A549 (cell line): ENCODE measurements at regions of chr6 and their contacts with region 1.

Region 1: DNA sequence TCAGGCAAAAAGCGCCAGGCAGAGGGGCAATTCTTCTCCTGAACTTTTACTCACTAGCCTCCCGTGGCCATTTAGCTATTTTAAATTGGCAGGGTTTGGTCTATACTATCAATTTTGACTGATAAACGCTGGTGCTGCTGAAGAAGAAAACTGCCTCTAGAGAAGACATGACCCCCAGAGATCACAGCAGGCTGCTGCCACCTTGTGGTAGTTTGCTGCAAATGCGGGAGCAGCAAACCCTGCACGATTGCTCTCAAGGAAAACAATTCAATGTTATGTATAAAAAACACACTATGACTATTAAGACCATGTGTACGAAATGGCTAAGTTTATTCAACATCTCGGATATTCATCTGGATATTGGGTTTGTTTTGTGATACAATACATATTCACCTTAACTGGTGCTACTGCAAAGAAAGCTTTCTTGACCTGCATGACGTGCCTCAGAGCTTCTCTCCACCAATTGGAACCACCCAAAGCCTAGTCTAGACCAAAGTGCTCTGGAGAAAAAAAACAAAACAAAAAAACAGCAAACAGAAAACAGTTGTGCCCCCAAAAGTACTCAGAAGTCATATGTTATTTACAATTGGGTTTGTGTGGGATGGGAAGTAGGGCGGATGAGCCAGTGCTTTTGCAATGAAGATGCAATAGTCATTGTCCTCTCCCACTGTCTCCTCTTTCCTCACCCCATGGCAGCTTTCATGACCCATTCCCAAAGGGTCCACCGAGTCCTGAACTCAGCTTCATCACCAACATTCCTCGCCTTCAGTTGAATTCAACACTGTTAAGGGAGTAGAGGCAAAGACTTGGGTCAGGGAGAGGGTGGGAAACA is 19.6 kb upstream of the IL17F start:
- DNase-seq: peak; percentile 21 to 51
- ATAC-seq: peak; percentile 80 to 84
- H3K4me3 ChIP-seq: no peak overlapping the region
- H3K27ac ChIP-seq: no peak overlapping the region
- H3K4me1 ChIP-seq: no peaks in the 10 kb centered on the region
- CTCF ChIP-seq: peak; percentile 70
- EP300 ChIP-seq: no peak
- POLR2A ChIP-seq: no peak
- RAD21 ChIP-seq: peak; percentile 54 to 55; a peak in 4 of 5 replicates

Region 2: GRCh38 chr6:52162940-52163908 is 100.7 kb before region 1 on chr6:
- CTCF ChIA-PET with region 1: interaction called, 10 read pairs
- POLR2A ChIA-PET with region 1: no interaction called
- DNase-seq: peak; percentile 2 to 38
- ATAC-seq: peak; percentile 56 to 63; a peak in 3 of 6 replicates
- H3K4me3 ChIP-seq: no peak overlapping the region
- H3K27ac ChIP-seq: no peak overlapping the region
- H3K4me1 ChIP-seq: no peaks in the 10 kb centered on the region
- CTCF ChIP-seq: peak; percentile 54
- EP300 ChIP-seq: no peak
- POLR2A ChIP-seq: no peak
- RAD21 ChIP-seq: peak; percentile 66 to 71; a peak in 4 of 5 replicates

Region 3: DNA sequence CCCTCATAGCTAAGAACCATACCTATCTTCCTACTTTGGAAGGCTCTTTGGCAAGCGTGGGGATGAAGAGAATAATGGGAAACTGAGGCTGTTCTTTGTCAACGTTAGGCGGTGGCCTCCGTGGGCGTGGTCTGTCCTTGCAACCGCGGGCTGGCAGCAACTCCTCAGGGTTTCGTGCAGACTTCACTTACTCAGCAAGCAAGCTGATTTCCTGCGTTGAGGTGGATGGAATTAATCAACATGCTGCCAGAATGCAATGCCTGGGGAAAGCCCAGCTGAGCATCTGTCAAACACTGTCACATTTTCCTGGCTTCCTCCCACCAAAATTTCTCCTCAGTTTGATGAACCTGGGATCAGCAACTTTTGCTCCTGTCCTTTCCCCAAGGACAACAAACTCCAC is 10.4 kb before region 1 on chr6:
- CTCF ChIA-PET with region 1: interaction called, 13 read pairs
- POLR2A ChIA-PET with region 1: no interaction called
- DNase-seq: no peak
- ATAC-seq: no peak
- H3K4me3 ChIP-seq: no peak overlapping the region
- H3K27ac ChIP-seq: no peak overlapping the region
- H3K4me1 ChIP-seq: no peaks in the 10 kb centered on the region
- CTCF ChIP-seq: no peak
- EP300 ChIP-seq: no peak
- POLR2A ChIP-seq: no peak
- RAD21 ChIP-seq: no peak

Region 4: DNA sequence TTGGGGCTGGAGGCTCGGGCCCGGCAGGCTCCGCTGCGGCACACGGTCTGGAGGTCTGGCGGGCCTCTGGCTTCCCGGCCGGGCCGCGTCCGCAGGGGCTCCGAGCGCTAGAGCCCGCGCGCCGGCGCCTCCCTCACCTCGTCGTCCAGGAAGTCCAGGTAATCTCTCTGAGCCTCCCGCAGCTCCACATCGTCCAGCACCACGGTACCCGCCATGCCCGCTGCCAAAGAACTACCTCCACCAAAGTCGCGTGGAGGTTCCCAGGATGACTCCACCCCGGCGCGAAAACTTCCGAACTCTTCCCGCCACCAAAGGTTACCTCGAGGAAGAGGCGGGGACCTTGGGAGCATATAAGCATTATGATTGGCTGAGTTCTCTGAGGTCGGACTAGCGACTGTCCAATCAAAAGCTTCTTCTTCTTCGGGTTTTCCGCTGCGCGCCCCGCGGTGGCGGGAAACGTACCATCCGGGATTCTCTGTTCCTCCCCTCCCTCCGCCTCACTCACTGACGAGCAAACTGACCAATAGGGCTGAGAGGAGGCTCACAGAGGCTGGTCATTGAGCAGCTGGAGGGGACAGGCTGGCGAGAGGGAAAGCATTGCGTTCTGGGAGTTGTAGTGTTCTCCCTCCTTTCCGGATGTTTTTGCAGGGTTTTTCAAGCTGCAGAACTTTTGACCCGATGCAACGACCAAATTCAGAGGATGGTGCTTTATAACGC is 20.7 kb after region 1 on chr6 and contains the start of gene MCM3:
- CTCF ChIA-PET with region 1: interaction called, 35 read pairs
- POLR2A ChIA-PET with region 1: no interaction called
- DNase-seq: peak; percentile 84 to 98
- ATAC-seq: peak; percentile 99 to 100
- H3K4me3 ChIP-seq: peak within 1 kb of the TSS; percentile 72
- H3K27ac ChIP-seq: peak within 1 kb of the TSS; percentile 78 to 91
- H3K4me1 ChIP-seq: peaks cover 17% of the 10 kb centered on the region; the same call in 2 of the 3 replicates
- CTCF ChIP-seq: no peak
- EP300 ChIP-seq: no peak
- POLR2A ChIP-seq: peak; percentile 59
- RAD21 ChIP-seq: no peak
- polyA plus RNA-seq, gene MCM3: 105 and 111 TPM in 2 replicates